CD8-positive, alpha-beta T cell (primary cell): ENCODE measurements at regions of chr10 and their contacts with region 1.

Region 1: DNA sequence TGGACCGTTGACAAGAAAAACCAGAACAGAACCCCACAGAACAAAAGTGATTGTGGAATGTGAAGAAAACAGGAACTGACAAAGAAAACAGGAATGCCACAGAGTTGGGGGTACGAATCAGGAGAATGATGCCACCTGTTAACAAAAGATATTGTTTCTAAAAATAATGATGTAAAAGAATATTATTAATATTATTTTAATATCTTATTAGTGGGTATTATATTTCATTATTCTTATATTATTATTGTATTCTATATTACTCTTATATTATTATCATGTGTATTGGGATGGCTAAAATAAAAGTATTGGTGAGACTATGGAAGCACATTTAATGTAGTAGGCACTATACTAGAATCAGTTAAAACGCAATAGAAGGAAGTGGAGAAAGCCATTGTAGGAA is 659.0 kb upstream of the PCDH15 start:
- DNase-seq: no peak
- ATAC-seq: no peak
- H3K4me3 ChIP-seq: no peak overlapping the region
- H3K4me3 Mint-ChIP-seq: no peak overlapping the region
- H3K27ac ChIP-seq: no peak overlapping the region
- H3K27ac Mint-ChIP-seq: no peak overlapping the region
- H3K4me1 ChIP-seq: no peaks in the 10 kb centered on the region
- H3K4me1 Mint-ChIP-seq: no peaks in the 10 kb centered on the region
- H3K27me3 ChIP-seq: no peaks in the 10 kb centered on the region
- H3K27me3 Mint-ChIP-seq: no peaks in the 10 kb centered on the region
- CTCF ChIP-seq: no peak

Region 2: GRCh38 chr10:55426138-55426537 is 33.9 kb before region 1 on chr10:
- CTCF ChIA-PET with region 1: no interaction called
- POLR2A ChIA-PET with region 1: no interaction called
- intact Hi-C with region 1: loop called in 1 of 2 experiments (anchors 1 kb)
- DNase-seq: no peak
- ATAC-seq: no peak
- H3K4me3 ChIP-seq: no peak overlapping the region
- H3K4me3 Mint-ChIP-seq: no peak overlapping the region
- H3K27ac ChIP-seq: no peak overlapping the region
- H3K27ac Mint-ChIP-seq: no peak overlapping the region
- H3K4me1 ChIP-seq: no peaks in the 10 kb centered on the region
- H3K4me1 Mint-ChIP-seq: no peaks in the 10 kb centered on the region
- H3K27me3 ChIP-seq: no peaks in the 10 kb centered on the region
- H3K27me3 Mint-ChIP-seq: no peaks in the 10 kb centered on the region
- CTCF ChIP-seq: no peak

Region 3: DNA sequence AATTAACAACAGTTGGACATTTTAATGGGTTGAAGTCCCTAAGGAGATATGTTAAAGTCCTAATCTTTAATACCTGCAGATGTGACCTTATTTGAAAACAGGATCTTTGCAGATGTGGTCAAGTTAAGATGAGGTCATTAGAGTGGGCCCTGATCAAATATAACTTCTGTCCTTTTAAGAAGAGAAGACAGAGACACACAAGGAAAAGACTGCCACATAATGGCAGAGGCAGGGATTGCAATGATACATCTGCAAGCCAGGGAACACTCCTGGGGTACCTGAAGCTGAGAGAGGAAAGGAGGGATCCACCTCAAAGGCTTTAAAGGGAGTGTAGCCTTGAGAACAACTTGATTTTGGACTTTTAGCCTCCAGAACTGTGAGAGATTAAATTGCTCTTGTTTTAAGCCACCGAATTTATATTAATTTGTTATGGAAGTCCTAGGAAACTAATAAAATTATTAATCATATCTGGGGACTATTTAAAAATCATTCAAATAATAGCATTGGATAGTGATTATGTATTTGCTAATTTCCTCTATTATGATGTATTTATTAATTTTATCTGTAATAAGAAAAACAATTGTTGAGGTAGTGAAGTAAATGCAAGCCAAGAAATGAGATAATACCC is 41.0 kb after region 1 on chr10:
- CTCF ChIA-PET with region 1: no interaction called
- POLR2A ChIA-PET with region 1: no interaction called
- intact Hi-C with region 1: loop called in 1 of 2 experiments (anchors 1 kb)
- DNase-seq: no peak
- ATAC-seq: no peak
- H3K4me3 ChIP-seq: no peak overlapping the region
- H3K4me3 Mint-ChIP-seq: no peak overlapping the region
- H3K27ac ChIP-seq: no peak overlapping the region
- H3K27ac Mint-ChIP-seq: no peak overlapping the region
- H3K4me1 ChIP-seq: no peaks in the 10 kb centered on the region
- H3K4me1 Mint-ChIP-seq: no peaks in the 10 kb centered on the region
- H3K27me3 ChIP-seq: no peaks in the 10 kb centered on the region
- H3K27me3 Mint-ChIP-seq: no peaks in the 10 kb centered on the region
- CTCF ChIP-seq: no peak